ENCODE measurements at regions of chr19 and their contacts with region 1.

Region 1: DNA sequence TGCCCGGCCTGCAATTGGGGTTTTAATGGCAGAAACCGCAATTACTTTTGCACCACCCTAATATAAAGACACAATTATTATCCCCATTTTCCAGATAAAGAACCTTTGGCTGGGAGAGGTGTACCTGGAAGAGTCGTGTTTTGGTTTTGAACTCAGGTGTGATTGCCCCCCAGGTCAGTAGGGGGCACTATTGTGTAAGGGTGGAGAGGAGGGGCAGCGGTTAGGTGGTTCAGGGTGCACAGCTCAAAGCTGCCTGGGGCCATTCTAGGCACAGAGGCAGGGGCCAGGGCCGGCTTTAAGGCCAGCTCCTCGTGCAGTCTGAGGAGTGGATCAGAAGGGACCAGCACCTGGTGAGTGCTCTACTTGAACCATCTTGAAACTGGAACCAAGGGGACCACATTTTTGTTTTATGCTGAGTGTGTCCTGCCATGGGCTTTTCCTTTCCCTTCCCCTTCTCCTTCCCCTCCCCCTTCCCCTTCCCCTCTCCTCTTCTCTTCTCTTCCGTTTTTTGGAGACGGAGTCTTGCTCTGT is 5.8 kb upstream of the FCGRT start:
- DNase-seq: peak; percentile 76 to 85
- H3K4me3 ChIP-seq: no peak overlapping the region
- H3K27ac ChIP-seq: no peak overlapping the region
- H3K4me1 ChIP-seq: peaks cover 2 to 18% (median 15%) of the 10 kb centered on the region in 4 donors
- H3K27me3 ChIP-seq: no peaks in the 10 kb centered on the region
- CTCF ChIP-seq: peak in 5 of 7 experiments; percentile 61 to 90 (median 80)
- EP300 ChIP-seq: no peak
- POLR2A ChIP-seq: no peak

Region 2: DNA sequence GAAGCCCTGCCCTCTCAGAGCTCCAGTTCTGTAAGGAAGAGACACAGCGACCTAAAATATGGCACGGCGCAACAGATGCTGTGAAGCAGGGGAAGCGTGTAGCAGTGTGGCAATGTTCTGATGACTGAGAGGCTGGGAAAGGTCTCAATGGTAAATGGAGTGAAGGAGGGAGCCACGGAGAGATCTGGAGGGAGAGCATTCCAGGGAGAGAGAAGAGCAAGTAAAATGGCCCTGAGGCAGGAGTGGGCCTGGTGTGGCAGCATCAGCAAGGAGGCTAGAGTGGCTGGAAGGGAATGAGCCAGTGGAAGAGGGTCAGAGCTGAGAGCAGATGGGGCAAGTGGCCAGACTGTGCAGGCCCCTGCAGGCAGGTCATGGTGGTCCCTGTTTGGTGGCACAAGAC is 37.5 kb after region 1 on chr19:
- intact Hi-C with region 1: loop called (anchors 5 kb)
- DNase-seq: no peak
- H3K4me3 ChIP-seq: no peak overlapping the region
- H3K27ac ChIP-seq: no peak overlapping the region
- H3K4me1 ChIP-seq: peaks cover 5 to 14% (median 7%) of the 10 kb centered on the region in 4 donors
- H3K27me3 ChIP-seq: no peaks in the 10 kb centered on the region
- CTCF ChIP-seq: no peak
- EP300 ChIP-seq: no peak
- POLR2A ChIP-seq: no peak

Region 3: GRCh38 chr19:49631014-49631588 is 124.5 kb after region 1 on chr19:
- intact Hi-C with region 1: no loop called
- DNase-seq: no peak
- H3K4me3 ChIP-seq: no peak overlapping the region
- H3K27ac ChIP-seq: peak overlapping the region in 3 of 5 donors; percentile 5 to 48 (median 20)
- H3K4me1 ChIP-seq: peaks cover 7 to 27% (median 20%) of the 10 kb centered on the region in 4 donors
- H3K27me3 ChIP-seq: no peaks in the 10 kb centered on the region
- CTCF ChIP-seq: no peak
- EP300 ChIP-seq: no peak
- POLR2A ChIP-seq: no peak